ENCODE measurements at regions of chr16 and their contacts with region 1.

Region 1: GRCh38 chr16:14529010-14529669 is 100.9 kb downstream of the PARN start:
- DNase-seq: peak; percentile 78 to 91 (median 82)
- H3K4me3 ChIP-seq: no peak overlapping the region
- H3K27ac ChIP-seq: peak overlapping the region; percentile 52 to 83 (median 78)
- H3K4me1 ChIP-seq: peaks cover 21 to 25% of the 10 kb centered on the region in 2 donors
- H3K27me3 ChIP-seq: no peaks in the 10 kb centered on the region
- CTCF ChIP-seq: peak; percentile 57 to 95 (median 90)
- POLR2A ChIP-seq: peak in 1 of 2 donors; percentile 60

Region 2: DNA sequence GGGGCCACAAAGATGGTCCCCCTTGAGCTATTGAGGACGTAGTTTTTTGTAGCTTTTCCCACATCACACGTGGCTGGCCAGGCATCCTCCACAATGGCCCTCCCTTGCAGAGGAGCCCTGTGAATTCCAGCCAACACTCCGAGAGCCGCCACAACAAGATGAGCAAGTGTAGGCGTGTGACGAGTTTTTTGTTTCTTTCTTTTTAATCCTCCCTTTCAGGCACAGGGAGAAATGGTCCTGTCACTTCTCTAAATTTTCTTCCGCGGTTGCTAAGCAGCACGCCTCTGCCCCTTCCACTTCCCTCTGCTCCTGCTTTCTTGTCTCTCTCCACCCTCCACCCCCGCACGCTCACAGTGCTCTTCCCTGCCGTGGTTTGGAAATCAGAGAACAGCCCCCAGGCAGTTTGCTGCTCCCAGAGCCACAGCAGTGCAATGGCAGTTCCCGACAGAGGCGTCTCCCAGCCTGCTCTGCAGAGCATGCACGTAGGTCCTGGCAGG is 526.0 kb before region 1 on chr16:
- intact Hi-C with region 1: no loop called
- DNase-seq: peak in 6 of 7 donors; percentile 49 to 89 (median 60)
- H3K4me3 ChIP-seq: peak overlapping the region in 2 of 4 donors; percentile 16 to 34
- H3K27ac ChIP-seq: peak overlapping the region in 3 of 5 donors; percentile 50 to 54 (median 51)
- H3K4me1 ChIP-seq: peaks cover 0 to 34% of the 10 kb centered on the region in 2 donors
- H3K27me3 ChIP-seq: no peaks in the 10 kb centered on the region
- CTCF ChIP-seq: peak in 2 of 6 experiments; percentile 10 to 61
- POLR2A ChIP-seq: no peak

Region 3: DNA sequence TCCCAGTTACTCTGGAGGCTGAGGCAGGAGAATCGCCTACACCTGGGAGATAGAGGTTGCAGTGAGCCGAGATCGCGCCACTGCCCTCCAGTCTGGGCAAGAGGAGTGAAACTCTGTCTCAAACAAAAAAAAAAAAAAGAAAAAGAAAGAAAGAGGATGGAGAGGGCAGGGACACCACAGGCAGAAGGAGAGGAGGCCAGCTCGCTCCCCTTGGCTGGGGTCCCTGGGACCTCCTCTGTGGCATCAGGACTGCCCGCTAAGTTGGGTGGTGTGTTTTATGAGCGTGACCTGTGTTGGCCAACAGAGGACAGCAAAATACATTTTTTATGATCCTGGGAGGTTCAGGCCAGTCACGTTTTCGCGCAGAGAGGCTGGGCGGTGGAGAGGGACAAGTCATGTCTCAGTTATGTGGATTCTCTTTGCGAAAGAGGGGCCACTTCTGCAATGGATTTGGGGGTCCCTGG is 228.4 kb before region 1 on chr16:
- intact Hi-C with region 1: loop called (anchors 5 to 10 kb)
- DNase-seq: peak; percentile 79 to 92 (median 87)
- H3K4me3 ChIP-seq: peak overlapping the region in 2 of 4 donors; percentile 26 to 100
- H3K27ac ChIP-seq: peak overlapping the region; percentile 39 to 95 (median 84)
- H3K4me1 ChIP-seq: peaks cover 14 to 24% of the 10 kb centered on the region in 2 donors
- H3K27me3 ChIP-seq: no peaks in the 10 kb centered on the region
- CTCF ChIP-seq: peak; percentile 44 to 90 (median 68)
- POLR2A ChIP-seq: peak in 1 of 2 donors; percentile 71